ENCODE measurements at regions of chrX and their contacts with region 1.

Region 1: DNA sequence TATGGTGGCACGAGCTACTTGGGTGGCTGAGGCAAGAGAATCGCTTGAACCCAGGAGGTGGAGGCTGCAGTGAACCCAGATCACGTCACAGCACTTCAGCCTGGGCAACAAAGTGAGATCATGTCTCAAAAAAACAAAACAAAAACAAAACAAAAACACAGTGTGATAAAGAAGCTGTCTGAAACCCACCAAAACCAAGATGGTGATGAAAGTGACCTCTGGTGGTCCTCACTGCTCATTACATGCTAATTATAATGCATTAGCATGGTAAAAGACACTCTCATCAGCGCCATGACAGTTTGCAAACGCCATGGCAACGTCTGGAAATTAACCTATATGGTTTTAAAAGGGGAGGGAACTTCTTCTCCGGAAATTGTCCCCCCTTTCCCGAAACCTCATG is 29.4 kb upstream of the OPHN1 start:
- DNase-seq: no peak
- ATAC-seq: no peak
- H3K4me3 ChIP-seq: no peak overlapping the region
- H3K27ac ChIP-seq: no peak overlapping the region
- H3K4me1 ChIP-seq: no peaks in the 10 kb centered on the region
- H3K27me3 ChIP-seq: no peaks in the 10 kb centered on the region

Region 2: GRCh38 chrX:68196939-68197791 is 265.5 kb before region 1 on chrX:
- intact Hi-C with region 1: loop called (anchors 5 kb)
- DNase-seq: no peak
- ATAC-seq: no peak
- H3K4me3 ChIP-seq: no peak overlapping the region
- H3K27ac ChIP-seq: no peak overlapping the region
- H3K4me1 ChIP-seq: no peaks in the 10 kb centered on the region
- H3K27me3 ChIP-seq: no peaks in the 10 kb centered on the region

Region 3: GRCh38 chrX:68332201-68332731 is 130.4 kb before region 1 on chrX:
- intact Hi-C with region 1: no loop called
- DNase-seq: no peak
- ATAC-seq: peak; percentile 36
- H3K4me3 ChIP-seq: no peak overlapping the region
- H3K27ac ChIP-seq: no peak overlapping the region
- H3K4me1 ChIP-seq: no peaks in the 10 kb centered on the region
- H3K27me3 ChIP-seq: no peaks in the 10 kb centered on the region